ENCODE measurements at regions of chr1 and their contacts with region 1.

Region 1: DNA sequence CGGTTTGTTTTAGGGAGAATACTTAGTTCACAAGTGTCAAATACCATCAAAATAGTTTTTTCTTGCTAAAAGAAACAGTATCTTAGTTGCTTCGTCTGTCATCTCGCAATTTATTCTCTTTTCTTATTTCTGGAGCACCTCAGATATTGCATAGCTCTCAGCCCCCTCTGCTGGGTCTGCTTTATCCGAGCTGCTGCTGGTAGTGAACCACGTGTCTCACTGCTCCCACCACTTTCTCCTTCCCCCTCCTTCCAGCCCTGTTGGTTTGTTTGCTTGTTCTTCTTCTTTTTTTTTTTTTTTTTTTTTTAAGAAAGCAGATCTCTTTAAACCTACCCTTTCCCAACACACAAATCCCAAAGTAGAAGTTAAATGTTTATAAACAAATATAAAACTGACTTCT is 170.8 kb downstream of the EDEM3 start:
- DNase-seq: no peak
- ATAC-seq: peak in 1 of 8 donors; percentile 54
- H3K4me3 ChIP-seq: no peak overlapping the region
- H3K27ac ChIP-seq: no peak overlapping the region
- H3K4me1 ChIP-seq: peaks cover 0 to 8% (median 2%) of the 10 kb centered on the region in 9 donors
- H3K27me3 ChIP-seq: no peaks in the 10 kb centered on the region
- CTCF ChIP-seq: no peak

Region 2: GRCh38 chr1:184610876-184611595 is 27.2 kb after region 1 on chr1:
- intact Hi-C with region 1: loop called in 1 of 10 experiments (anchors 5 kb)
- DNase-seq: no peak
- ATAC-seq: peak in 7 of 8 donors; percentile 51 to 81 (median 62)
- H3K4me3 ChIP-seq: peak overlapping the region in 1 of 10 donors; percentile 26
- H3K27ac ChIP-seq: peak overlapping the region in 8 of 10 donors; percentile 3 to 66 (median 36)
- H3K4me1 ChIP-seq: peaks cover 8 to 54% (median 35%) of the 10 kb centered on the region in 9 donors
- H3K27me3 ChIP-seq: no peaks in the 10 kb centered on the region
- CTCF ChIP-seq: no peak